Transverse colon (tissue), 4 donors: ENCODE measurements at regions of chr2 and their contacts with region 1.

Region 1: GRCh38 chr2:100921685-100922174 is 80.4 kb upstream of the RPL31 start:
- DNase-seq: no peak
- H3K4me3 ChIP-seq: no peak overlapping the region
- H3K27ac ChIP-seq: no peak overlapping the region
- H3K4me1 ChIP-seq: peaks cover 0 to 6% (median 0%) of the 10 kb centered on the region in 4 donors
- H3K27me3 ChIP-seq: no peaks in the 10 kb centered on the region
- CTCF ChIP-seq: no peak
- EP300 ChIP-seq: no peak
- POLR2A ChIP-seq: no peak

Region 2: DNA sequence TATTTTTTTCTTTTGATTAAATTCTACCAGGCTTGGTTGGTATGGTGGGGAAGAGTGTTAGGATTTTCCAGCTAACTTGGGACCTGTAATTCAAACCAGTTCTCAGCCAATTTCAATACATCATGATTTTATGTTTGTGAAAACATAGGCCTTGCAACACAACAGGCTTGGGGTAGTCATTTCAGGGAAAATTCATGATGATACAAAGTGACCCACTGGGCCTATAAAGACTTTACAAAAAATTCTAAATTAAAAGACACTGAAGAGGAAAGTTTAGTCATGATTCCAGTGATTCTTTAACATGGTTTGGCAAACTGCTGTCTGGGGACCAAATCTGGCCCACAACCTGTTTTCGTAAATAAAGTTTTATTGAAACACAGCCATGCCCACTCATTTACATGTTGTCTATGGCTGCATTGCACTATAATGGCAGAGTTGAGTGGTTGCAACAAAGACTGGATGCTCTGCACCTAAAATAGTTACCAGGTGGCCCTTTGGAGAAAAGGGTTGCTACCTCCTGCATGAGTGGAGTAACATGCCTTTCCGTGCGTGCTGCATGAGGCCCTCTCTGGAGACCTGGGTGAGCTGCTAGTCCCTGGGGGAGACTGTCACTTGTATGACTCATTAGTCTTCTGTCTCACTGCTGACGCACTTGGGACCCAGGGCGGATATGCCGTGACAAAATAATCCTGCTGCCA is 28.2 kb before region 1 on chr2:
- in situ Hi-C with region 1: no loop called
- intact Hi-C with region 1: loop called (anchors 1 kb)
- DNase-seq: no peak
- H3K4me3 ChIP-seq: no peak overlapping the region
- H3K27ac ChIP-seq: no peak overlapping the region
- H3K4me1 ChIP-seq: peaks cover 0 to 22% (median 12%) of the 10 kb centered on the region in 4 donors
- H3K27me3 ChIP-seq: no peaks in the 10 kb centered on the region
- CTCF ChIP-seq: no peak
- EP300 ChIP-seq: no peak
- POLR2A ChIP-seq: no peak